Left ventricle myocardium inferior (tissue), 1 donor: ENCODE measurements at regions of chr4 and their contacts with region 1.

Region 1: GRCh38 chr4:155787113-155787710 is 28.4 kb downstream of the GUCY1B1 start:
- DNase-seq: no peak
- H3K4me3 ChIP-seq: no peak overlapping the region
- H3K27ac ChIP-seq: peak overlapping the region; percentile 37
- H3K4me1 ChIP-seq: peaks cover 65% of the 10 kb centered on the region
- H3K27me3 ChIP-seq: no peaks in the 10 kb centered on the region
- CTCF ChIP-seq: peak; percentile 85

Region 2: GRCh38 chr4:155403886-155404285 is 383.3 kb before region 1 on chr4:
- intact Hi-C with region 1: loop called (anchors 10 kb)
- DNase-seq: no peak
- H3K4me3 ChIP-seq: no peak overlapping the region
- H3K27ac ChIP-seq: no peak overlapping the region
- H3K4me1 ChIP-seq: no peaks in the 10 kb centered on the region
- H3K27me3 ChIP-seq: no peaks in the 10 kb centered on the region
- CTCF ChIP-seq: peak; percentile 65

Region 3: GRCh38 chr4:155442267-155443105 is 344.7 kb before region 1 on chr4:
- intact Hi-C with region 1: loop called (anchors 2 kb)
- DNase-seq: peak; percentile 85
- H3K4me3 ChIP-seq: peak overlapping the region; percentile 47
- H3K27ac ChIP-seq: peak overlapping the region; percentile 48
- H3K4me1 ChIP-seq: peaks cover 14% of the 10 kb centered on the region
- H3K27me3 ChIP-seq: no peaks in the 10 kb centered on the region
- CTCF ChIP-seq: peak; percentile 96

Region 4: DNA sequence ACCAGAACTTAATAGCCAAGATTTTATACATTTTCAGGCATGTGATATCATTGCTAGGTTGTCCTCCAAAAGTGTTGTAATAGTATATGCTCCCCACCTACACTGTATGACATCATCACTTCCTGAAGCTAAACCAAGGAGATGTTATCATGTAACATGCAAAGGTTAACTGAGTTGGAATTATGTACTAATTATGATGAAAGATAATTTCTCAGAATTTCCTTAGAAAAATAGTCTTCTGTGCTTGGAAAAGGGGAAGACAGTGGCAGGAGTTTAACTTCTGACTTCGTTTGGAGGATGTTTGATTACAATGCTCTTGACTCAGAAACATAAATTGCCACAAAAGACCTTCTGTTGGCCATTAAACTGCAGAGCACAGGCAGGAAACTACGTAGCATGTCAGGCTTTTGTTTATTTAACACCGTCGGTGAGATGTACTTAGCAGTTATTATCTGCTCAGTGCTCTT is 204.2 kb before region 1 on chr4:
- intact Hi-C with region 1: no loop called
- DNase-seq: no peak
- H3K4me3 ChIP-seq: no peak overlapping the region
- H3K27ac ChIP-seq: peak overlapping the region; percentile 28
- H3K4me1 ChIP-seq: peaks cover 19% of the 10 kb centered on the region
- H3K27me3 ChIP-seq: no peaks in the 10 kb centered on the region
- CTCF ChIP-seq: no peak

Region 5: GRCh38 chr4:155855892-155856291 is 68.7 kb after region 1 on chr4:
- intact Hi-C with region 1: no loop called
- DNase-seq: no peak
- H3K4me3 ChIP-seq: no peak overlapping the region
- H3K27ac ChIP-seq: no peak overlapping the region
- H3K4me1 ChIP-seq: no peaks in the 10 kb centered on the region
- H3K27me3 ChIP-seq: no peaks in the 10 kb centered on the region
- CTCF ChIP-seq: no peak